ENCODE measurements at regions of chr3 and their contacts with region 1.

Region 1: GRCh38 chr3:192844836-192845525 is 72.7 kb downstream of the MB21D2 start:
- DNase-seq: no peak
- CTCF ChIP-seq: no peak

Region 2: DNA sequence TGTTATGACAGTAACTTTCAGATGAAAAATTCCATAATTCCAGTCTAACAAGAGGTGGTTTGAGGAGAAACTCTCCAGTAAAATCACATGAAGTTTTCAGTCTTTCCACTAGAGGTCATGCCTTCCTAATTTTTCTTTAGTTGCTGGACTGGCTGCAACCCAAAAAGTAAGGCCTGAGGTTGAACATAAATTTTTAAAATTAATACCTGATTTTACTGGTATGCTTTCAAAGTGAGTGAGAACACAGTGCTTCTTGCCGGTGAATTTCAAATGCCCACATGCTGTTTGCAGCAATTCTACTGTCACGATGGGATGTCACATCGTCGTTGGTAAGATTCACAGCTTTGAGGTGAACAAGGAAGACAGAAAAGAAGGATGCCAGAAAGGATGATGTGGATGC is 28.6 kb before region 1 on chr3:
- CTCF ChIA-PET with region 1: interaction called, 17 read pairs
- POLR2A ChIA-PET with region 1: interaction called, 7 read pairs
- DNase-seq: no peak
- CTCF ChIP-seq: peak; percentile 38

Region 3: GRCh38 chr3:192825657-192826200 is 19.3 kb before region 1 on chr3:
- CTCF ChIA-PET with region 1: interaction called, 12 read pairs
- POLR2A ChIA-PET with region 1: no interaction called
- DNase-seq: no peak
- CTCF ChIP-seq: peak; percentile 1

Measured in GM10248 (cell line).